ENCODE measurements at regions of chr7 and their contacts with region 1.

Region 1: GRCh38 chr7:34823640-34824258 is 165.7 kb downstream of the NPSR1 start:
- DNase-seq: no peak
- H3K4me3 ChIP-seq: no peak overlapping the region
- H3K27me3 ChIP-seq: no peaks in the 10 kb centered on the region
- CTCF ChIP-seq: peak; percentile 90

Region 2: GRCh38 chr7:34837801-34838201 is 14.1 kb after region 1 on chr7:
- CTCF ChIA-PET with region 1: interaction called, 15 read pairs
- POLR2A ChIA-PET with region 1: no interaction called
- DNase-seq: no peak
- H3K4me3 ChIP-seq: no peak overlapping the region
- H3K27me3 ChIP-seq: no peaks in the 10 kb centered on the region
- CTCF ChIP-seq: no peak

Region 3: DNA sequence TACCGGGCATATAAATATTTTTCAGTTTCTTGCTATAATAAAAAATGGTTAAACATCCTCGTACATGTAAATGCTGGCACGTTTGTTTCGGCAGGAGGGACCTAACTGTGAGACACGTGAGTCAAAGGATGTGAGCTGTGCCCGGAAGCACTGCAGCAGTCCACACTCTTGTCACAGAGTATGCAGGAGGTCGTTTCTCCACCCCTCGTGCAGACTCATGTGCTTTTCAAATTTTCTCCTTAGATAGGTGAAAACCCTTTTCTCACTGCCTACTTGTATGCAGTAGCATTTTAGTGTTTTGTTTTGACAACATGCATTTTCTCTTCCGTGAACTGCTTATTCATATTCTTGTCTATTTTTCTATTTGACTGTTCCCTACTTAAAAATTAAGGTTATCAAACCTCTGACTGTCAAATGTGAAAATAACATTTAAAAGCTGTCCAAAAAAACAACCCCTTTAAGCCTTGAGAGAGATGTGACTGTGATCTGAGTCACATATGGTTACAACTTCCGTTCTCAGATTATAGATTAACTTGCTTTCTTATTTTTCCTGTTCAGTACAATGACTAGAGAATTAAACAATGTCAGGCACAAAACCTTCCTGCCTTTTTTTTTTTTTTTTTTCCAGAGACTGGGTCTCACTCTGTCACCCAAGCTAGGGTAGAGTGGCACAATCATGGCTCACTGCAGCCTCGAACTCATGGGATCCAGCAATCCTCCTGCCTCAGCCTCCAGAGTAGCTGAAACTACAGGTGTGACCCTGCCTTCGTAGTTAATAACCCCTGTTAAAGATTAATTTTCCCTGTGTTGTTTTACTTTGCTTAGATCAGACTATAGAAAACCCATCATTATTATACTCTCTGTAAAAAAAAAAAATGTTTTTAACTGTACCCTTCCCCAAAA is 168.4 kb after region 1 on chr7:
- CTCF ChIA-PET with region 1: no interaction called
- POLR2A ChIA-PET with region 1: no interaction called
- DNase-seq: no peak
- H3K4me3 ChIP-seq: no peak overlapping the region
- H3K27me3 ChIP-seq: no peaks in the 10 kb centered on the region
- CTCF ChIP-seq: no peak